Aorta (tissue), 5 donors: ENCODE measurements at regions of chr7 and their contacts with region 1.

Region 1: DNA sequence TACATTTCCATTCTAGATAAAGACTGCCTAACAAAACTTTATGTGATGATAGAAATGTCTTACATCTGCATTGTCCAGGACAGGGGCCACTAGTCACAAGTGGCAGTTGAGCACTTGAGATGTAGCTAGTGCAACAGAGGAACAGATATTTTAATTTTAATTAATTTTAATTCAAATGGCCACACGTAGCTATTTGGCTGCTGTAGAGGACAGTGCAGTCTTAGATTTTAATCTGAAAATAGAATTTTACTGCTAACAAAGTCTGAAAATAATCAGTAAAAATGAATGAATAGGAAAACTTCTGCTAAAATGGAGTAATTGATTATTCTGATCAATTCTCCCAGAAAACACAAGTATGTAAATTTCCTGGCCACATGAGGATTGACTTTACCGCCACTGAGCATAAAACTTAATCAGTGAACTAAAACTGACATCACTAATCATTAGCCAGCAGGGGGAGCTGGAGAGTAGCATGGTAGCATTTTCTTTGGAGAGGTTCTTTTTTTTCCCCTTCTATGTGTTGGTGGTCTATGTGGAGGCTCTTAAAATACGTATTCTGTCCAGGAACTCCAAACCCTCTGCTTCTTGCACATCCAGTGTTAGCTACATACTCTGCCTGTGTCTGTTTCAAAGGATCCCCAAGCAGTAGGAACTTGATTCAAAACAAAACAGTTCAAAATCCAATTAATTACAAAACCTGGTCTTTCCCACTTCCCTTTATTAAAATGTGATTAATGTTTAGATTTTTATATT is 52.1 kb downstream of the TSPAN12 start:
- DNase-seq: no peak
- ATAC-seq: peak; percentile 85
- H3K4me3 ChIP-seq: no peak overlapping the region
- H3K27ac ChIP-seq: no peak overlapping the region
- H3K4me1 ChIP-seq: no peaks in the 10 kb centered on the region
- H3K27me3 ChIP-seq: no peaks in the 10 kb centered on the region

Region 2: GRCh38 chr7:120207037-120207436 is 598.8 kb before region 1 on chr7:
- intact Hi-C with region 1: no loop called
- DNase-seq: no peak
- ATAC-seq: no peak
- H3K4me3 ChIP-seq: no peak overlapping the region
- H3K27ac ChIP-seq: no peak overlapping the region
- H3K4me1 ChIP-seq: no peaks in the 10 kb centered on the region
- H3K27me3 ChIP-seq: no peaks in the 10 kb centered on the region

Region 3: DNA sequence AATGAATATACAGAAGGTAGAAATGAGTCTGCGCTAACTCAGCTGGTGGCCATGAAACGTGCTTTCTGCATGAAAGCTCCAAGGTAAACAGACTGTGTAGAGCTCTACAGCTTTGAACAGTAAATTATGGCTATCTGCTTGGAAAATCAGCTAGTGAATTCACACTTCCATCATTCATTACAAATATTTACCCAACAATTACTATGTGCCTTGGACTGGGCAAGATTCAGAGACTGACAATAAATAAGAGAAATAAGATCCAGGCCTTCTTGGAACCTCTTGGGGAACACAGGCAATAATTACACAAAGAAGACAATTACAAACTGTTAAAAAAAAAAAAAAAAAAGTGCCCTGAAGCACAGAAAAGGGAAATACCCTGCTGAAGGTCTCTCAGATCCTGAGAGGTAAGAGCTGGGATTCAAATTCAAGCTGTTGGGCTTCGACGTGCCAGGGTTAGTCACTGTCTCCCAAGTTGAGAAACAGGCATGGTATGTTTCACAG is 36.4 kb after region 1 on chr7:
- intact Hi-C with region 1: no loop called
- DNase-seq: no peak
- ATAC-seq: no peak
- H3K4me3 ChIP-seq: no peak overlapping the region
- H3K27ac ChIP-seq: no peak overlapping the region
- H3K4me1 ChIP-seq: no peaks in the 10 kb centered on the region
- H3K27me3 ChIP-seq: no peaks in the 10 kb centered on the region

Region 4: GRCh38 chr7:120927454-120928103 is 121.8 kb after region 1 on chr7:
- intact Hi-C with region 1: no loop called
- DNase-seq: no peak
- ATAC-seq: no peak
- H3K4me3 ChIP-seq: no peak overlapping the region
- H3K27ac ChIP-seq: no peak overlapping the region
- H3K4me1 ChIP-seq: no peaks in the 10 kb centered on the region
- H3K27me3 ChIP-seq: peaks cover 0 to 2% of the 10 kb centered on the region in 2 donors

Region 5: DNA sequence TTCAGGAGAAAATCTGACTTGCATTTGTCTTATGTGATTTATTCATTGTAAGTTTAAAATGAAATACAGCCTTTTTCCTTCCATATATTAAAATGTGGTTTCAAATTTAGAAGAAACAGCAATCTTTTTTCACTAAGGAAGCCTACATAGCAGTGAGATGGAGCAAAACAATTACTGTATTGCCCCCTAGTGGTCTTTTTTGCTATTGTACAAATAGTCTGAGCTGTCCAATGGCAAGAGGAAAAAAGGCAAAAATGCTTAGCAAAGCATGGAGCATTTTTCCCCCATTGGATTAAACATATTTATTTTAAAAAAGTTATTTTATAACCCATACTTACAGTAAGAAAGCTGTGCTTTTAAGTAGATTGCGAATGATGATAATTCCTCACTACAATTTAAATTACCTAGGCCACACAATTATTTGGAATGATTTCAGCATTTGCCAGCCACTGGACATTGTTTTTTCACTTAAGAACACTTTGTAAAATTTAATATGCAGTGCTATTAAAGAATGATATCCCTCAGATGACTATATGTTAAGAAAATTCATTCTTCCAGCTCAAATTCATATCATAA is 302.2 kb after region 1 on chr7:
- intact Hi-C with region 1: loop called in 1 of 2 experiments (anchors 10 kb)
- DNase-seq: no peak
- ATAC-seq: peak; percentile 81
- H3K4me3 ChIP-seq: no peak overlapping the region
- H3K27ac ChIP-seq: no peak overlapping the region
- H3K4me1 ChIP-seq: peaks cover 0 to 2% of the 10 kb centered on the region in 2 donors
- H3K27me3 ChIP-seq: no peaks in the 10 kb centered on the region